Ovary (tissue), 10 donors: ENCODE measurements at regions of chr18 and their contacts with region 1.

Region 1: DNA sequence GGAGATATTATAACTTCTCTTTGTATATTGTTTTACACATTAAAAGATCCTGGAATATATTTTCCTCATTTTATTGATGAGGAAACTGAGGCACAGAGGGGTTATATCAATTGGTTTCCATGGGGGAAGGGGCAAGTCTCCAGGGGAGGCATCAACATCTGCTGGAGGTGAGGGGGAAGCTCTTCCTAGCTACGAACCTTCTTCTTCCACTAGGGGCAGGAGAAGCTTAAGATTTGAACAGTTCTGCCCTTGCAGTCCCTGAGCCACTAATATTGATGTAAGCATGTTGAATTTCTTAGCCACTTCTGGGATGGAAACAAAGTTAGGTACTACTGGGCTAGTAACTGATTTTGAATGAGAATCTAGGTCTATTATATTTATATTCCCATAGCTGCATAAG is 140.1 kb upstream of the AQP4 start:
- DNase-seq: no peak
- H3K4me3 ChIP-seq: no peak overlapping the region
- H3K27ac ChIP-seq: no peak overlapping the region
- H3K4me1 ChIP-seq: no peaks in the 10 kb centered on the region
- H3K27me3 ChIP-seq: no peaks in the 10 kb centered on the region
- CTCF ChIP-seq: no peak
- EP300 ChIP-seq: no peak
- POLR2A ChIP-seq: no peak

Region 2: DNA sequence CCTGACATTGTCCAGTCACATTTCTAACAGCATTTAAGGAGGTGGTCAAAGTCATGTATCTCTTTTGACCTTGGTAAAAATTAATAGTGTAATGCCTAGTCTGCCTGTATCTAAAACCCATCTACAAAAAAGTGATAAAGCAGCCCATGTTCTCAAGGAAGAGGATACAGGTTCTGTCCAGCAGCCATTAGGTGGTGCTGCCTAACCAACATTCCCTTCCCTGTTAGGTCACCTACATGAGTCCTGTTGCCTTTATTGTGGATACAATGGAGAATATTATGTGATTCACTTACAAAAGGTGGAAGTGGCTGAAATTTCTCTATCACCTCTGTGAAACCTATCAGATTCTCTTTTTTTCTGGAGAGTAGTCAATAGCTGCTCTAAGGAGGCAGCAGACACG is 192.5 kb before region 1 on chr18:
- intact Hi-C with region 1: loop called in 1 of 4 experiments (anchors 10 kb)
- DNase-seq: peak; percentile 52 to 70 (median 57)
- H3K4me3 ChIP-seq: no peak overlapping the region
- H3K27ac ChIP-seq: no peak overlapping the region
- H3K4me1 ChIP-seq: no peaks in the 10 kb centered on the region
- H3K27me3 ChIP-seq: no peaks in the 10 kb centered on the region
- CTCF ChIP-seq: peak in 2 of 3 donors; percentile 33 to 55
- EP300 ChIP-seq: no peak
- POLR2A ChIP-seq: no peak